A673 (cell line): ENCODE measurements at regions of chr17 and their contacts with region 1.

Region 1: DNA sequence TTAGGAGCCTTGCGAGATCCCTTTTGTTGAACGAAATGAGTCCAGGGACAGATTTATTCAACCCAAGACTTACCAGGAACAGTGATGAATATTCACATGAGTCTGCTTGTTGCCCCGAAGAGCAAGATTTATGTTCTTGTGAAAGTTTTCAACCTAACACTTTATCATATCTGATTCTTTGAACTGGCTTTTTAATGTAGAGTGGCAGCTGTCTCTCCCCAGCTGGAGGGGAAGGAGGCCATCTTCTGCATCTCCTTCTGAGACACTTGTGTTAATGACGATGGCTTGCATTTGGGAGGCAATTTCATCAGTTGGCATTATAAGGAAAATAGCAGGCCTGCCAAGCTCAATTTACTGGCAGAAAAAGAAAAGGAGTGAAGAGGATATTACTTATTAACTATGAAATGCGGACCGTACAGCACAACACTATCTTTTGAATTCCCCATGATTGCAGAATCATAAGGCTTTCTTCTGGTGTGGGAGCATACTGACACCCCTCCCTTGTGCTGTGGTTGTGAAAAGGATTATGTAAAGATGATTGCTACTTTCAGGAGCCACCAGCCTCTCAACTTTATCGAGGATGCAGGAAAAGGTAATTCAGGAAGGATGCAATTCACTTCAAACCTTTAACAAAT is 35.7 kb downstream of the SMARCE1 start:
- DNase-seq: no peak
- H3K4me3 ChIP-seq: no peak overlapping the region
- H3K27ac ChIP-seq: no peak overlapping the region
- H3K4me1 ChIP-seq: no peaks in the 10 kb centered on the region
- H3K27me3 ChIP-seq: no peaks in the 10 kb centered on the region
- CTCF ChIP-seq: no peak

Region 2: DNA sequence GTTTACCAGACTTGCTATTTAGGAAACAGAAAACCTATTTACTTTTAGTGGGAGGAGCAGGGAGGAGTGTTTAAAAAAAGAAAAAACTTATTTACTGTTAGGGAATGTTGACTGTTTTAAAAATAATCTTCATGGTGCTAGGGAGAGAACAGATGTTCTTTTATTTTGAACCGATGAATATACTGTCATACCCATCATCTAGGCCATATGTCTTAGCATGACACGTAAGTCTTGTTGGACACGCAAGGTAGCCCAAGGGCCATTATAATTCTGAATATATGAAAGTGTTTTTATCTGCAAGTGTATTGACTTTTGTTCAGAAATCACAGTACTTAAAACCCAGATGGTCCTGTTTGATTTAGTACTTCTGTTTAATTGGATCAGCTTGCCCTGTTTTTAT is 381.3 kb before region 1 on chr17:
- CTCF ChIA-PET with region 1: no interaction called
- POLR2A ChIA-PET with region 1: interaction called, 11 read pairs
- intact Hi-C with region 1: no loop called
- DNase-seq: no peak
- H3K4me3 ChIP-seq: no peak overlapping the region
- H3K27ac ChIP-seq: no peak overlapping the region
- H3K4me1 ChIP-seq: no peaks in the 10 kb centered on the region
- H3K27me3 ChIP-seq: no peaks in the 10 kb centered on the region
- CTCF ChIP-seq: no peak

Region 3: GRCh38 chr17:40551879-40552768 is 59.8 kb before region 1 on chr17:
- CTCF ChIA-PET with region 1: no interaction called
- POLR2A ChIA-PET with region 1: no interaction called
- intact Hi-C with region 1: no loop called
- DNase-seq: no peak
- H3K4me3 ChIP-seq: no peak overlapping the region
- H3K27ac ChIP-seq: no peak overlapping the region
- H3K4me1 ChIP-seq: peaks cover 3% of the 10 kb centered on the region
- H3K27me3 ChIP-seq: no peaks in the 10 kb centered on the region
- CTCF ChIP-seq: no peak

Region 4: GRCh38 chr17:40625311-40625710 is 13.4 kb after region 1 on chr17:
- CTCF ChIA-PET with region 1: no interaction called
- POLR2A ChIA-PET with region 1: no interaction called
- intact Hi-C with region 1: no loop called
- DNase-seq: no peak
- H3K4me3 ChIP-seq: no peak overlapping the region
- H3K27ac ChIP-seq: no peak overlapping the region
- H3K4me1 ChIP-seq: peaks cover 6% of the 10 kb centered on the region
- H3K27me3 ChIP-seq: no peaks in the 10 kb centered on the region
- CTCF ChIP-seq: no peak